ENCODE measurements at regions of chr20 and their contacts with region 1.

Region 1: GRCh38 chr20:8722276-8722928 is 346.5 kb upstream of the PLCB4 start:
- DNase-seq: no peak
- ATAC-seq: peak; percentile 64 to 72
- H3K4me3 ChIP-seq: no peak overlapping the region
- H3K27ac ChIP-seq: no peak overlapping the region
- H3K4me1 ChIP-seq: peaks cover 0 to 5% of the 10 kb centered on the region in 2 donors
- H3K27me3 ChIP-seq: no peaks in the 10 kb centered on the region
- CTCF ChIP-seq: peak; percentile 70 to 84 (median 73)
- POLR2A ChIP-seq: no peak

Region 2: DNA sequence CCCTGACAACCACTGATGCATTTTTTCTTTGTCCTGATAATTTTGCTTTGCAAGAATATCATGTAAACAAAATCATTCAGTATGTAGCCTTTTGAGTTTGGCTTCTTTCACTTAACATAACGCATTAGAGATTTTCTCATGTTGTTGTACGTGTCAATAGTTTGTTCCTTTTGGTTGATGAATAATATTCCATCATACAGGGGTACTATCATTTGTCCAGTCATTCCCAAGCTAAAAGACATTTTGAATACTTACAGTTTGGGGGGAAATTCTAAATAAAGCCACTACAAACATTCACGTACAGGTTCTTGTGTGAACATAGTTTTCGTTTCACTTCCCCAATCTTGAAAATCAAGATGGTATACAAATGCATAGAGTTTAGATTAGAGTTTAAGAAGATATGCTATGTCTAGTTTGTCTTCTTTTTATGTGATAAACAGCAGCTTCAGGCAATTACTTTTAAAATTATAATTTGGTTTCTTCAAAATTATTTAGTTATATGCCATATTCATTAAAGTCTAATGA is 787.3 kb before region 1 on chr20:
- in situ Hi-C with region 1: loop called in 1 of 4 experiments (anchors 10 kb)
- intact Hi-C with region 1: loop called (anchors 5 kb)
- DNase-seq: no peak
- ATAC-seq: no peak
- H3K4me3 ChIP-seq: no peak overlapping the region
- H3K27ac ChIP-seq: no peak overlapping the region
- H3K4me1 ChIP-seq: no peaks in the 10 kb centered on the region
- H3K27me3 ChIP-seq: no peaks in the 10 kb centered on the region
- CTCF ChIP-seq: no peak
- POLR2A ChIP-seq: no peak

Region 3: DNA sequence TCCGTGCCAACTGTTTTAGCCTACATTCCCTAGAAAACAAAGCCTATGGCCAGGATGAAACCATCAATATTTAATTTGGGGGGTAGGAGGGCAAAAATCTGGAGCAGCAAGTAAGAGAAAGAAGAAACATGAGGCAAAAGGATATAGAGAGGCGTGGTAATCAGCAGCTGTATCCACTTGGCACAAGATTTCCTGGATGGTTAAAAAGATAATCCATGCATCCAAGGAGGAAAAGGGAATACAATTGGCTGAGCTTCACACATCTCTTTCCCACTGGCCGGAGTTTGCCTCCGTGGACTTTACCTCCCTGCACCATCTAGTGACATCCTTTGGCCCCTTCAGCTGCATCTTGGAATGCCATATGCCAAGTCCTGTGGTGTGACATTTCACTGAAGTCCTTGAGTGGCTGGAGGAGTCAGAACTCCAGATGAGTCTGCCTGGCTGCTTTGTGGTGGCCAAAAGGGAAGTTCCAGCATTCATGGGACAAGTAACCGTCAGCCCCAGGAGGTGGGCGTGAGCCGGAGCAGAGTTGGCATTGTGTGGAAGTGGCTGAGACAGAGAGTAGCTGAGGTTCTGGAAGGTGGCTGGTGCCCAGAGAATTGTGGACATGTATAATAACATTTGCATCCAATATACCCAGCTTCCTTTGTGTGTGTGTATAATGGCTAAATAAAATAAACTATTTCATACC is 689.1 kb before region 1 on chr20:
- in situ Hi-C with region 1: no loop called
- intact Hi-C with region 1: no loop called
- DNase-seq: no peak
- ATAC-seq: no peak
- H3K4me3 ChIP-seq: no peak overlapping the region
- H3K27ac ChIP-seq: no peak overlapping the region
- H3K4me1 ChIP-seq: no peaks in the 10 kb centered on the region
- H3K27me3 ChIP-seq: no peaks in the 10 kb centered on the region
- CTCF ChIP-seq: no peak
- POLR2A ChIP-seq: no peak

Region 4: GRCh38 chr20:8043687-8044282 is 678.6 kb before region 1 on chr20:
- in situ Hi-C with region 1: loop called in 3 of 4 experiments (anchors 5 to 10 kb)
- intact Hi-C with region 1: loop called (anchors 1 kb)
- DNase-seq: no peak
- ATAC-seq: peak; percentile 80
- H3K4me3 ChIP-seq: no peak overlapping the region
- H3K27ac ChIP-seq: no peak overlapping the region
- H3K4me1 ChIP-seq: no peaks in the 10 kb centered on the region
- H3K27me3 ChIP-seq: no peaks in the 10 kb centered on the region
- CTCF ChIP-seq: peak; percentile 41 to 76 (median 65)
- POLR2A ChIP-seq: no peak

Region 5: DNA sequence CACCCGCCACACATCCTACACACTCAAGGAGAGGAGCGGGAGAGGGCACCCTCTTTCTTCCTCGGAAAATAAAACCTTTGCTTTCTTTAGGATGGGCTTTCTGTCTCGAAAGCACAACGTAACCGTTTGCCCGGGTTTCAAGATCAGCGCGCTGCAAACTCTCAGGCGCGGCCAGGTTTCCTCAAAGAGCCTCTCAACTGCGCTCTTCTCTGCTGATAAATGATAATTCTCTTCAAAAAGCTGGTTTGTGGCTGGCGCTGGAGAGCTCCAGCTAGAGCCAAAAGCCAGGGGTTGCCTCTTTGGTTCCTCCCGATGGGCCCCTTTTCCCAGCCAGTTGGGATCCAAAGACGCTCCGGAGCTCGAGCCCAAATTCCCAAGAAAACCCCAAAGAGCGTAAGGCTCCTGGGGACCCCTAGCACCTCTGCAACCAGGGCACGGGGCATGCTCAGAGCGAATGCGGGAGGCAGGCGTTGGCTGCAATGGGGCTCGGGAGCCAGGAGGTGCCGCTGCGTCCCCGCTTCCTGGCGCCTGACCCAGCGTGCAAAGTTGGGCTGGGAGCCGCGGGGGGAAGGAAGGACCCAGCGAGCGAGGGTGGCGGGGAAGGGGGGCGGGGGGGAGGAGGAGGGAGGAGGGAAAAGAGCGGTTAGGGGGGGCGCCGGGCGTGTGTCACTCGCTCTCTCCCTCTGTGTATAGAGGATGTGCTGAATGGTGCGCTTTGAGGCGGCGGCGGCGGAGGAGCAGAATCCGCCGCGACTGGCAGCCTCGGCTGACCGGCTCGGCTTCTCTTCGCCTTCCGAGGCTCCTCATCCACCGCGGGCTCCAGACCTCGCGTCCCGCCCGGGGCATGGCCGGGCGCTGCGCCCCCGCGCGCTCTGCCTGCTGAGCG is 590.6 kb before region 1 on chr20 and contains the start of gene PLCB1:
- in situ Hi-C with region 1: loop called in 2 of 4 experiments (anchors 5 to 10 kb)
- intact Hi-C with region 1: loop called (anchors 1 kb)
- DNase-seq: peak; percentile 70 to 73
- ATAC-seq: peak; percentile 84 to 88
- H3K4me3 ChIP-seq: peak within 1 kb of the TSS; percentile 66 to 86 (median 72)
- H3K27ac ChIP-seq: peak within 1 kb of the TSS; percentile 68 to 85 (median 73)
- H3K4me1 ChIP-seq: peaks cover 18% of the 10 kb centered on the region in 2 donors
- H3K27me3 ChIP-seq: no peaks in the 10 kb centered on the region
- CTCF ChIP-seq: peak; percentile 80 to 97 (median 88)
- POLR2A ChIP-seq: no peak
- total RNA-seq, gene PLCB1: 4.1 to 10.0 (median 7.6) TPM

Region 6: GRCh38 chr20:8389381-8390036 is 332.9 kb before region 1 on chr20:
- in situ Hi-C with region 1: loop called in 1 of 4 experiments (anchors 25 kb)
- intact Hi-C with region 1: loop called (anchors 2 kb)
- DNase-seq: no peak
- ATAC-seq: peak in 1 of 2 donors; percentile 65
- H3K4me3 ChIP-seq: peak overlapping the region in 3 of 4 donors; percentile 6 to 27 (median 22)
- H3K27ac ChIP-seq: no peak overlapping the region
- H3K4me1 ChIP-seq: peaks cover 0 to 28% of the 10 kb centered on the region in 2 donors
- H3K27me3 ChIP-seq: no peaks in the 10 kb centered on the region
- CTCF ChIP-seq: peak; percentile 46 to 68 (median 59)
- POLR2A ChIP-seq: no peak

Region 7: DNA sequence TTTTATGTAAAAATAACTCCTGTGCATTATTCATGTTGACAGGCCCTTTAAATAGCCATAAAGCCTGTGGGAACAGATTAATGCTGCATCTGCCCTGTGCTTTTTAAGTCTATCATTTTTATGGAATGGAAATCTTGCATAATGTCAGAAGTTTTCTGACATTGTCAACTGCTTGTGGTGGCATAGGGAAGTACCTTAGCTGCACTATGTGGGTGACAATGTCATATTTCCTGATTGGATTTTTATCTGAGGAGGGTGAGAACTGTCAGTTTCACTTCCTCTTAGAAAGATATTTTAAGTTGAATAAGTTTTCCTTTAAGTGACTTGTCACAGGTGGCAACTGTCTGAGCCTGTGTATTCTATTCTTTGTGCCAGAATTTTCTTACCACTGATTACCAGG is 322.5 kb before region 1 on chr20:
- in situ Hi-C with region 1: loop called in 2 of 4 experiments (anchors 25 kb)
- intact Hi-C with region 1: no loop called
- DNase-seq: no peak
- ATAC-seq: no peak
- H3K4me3 ChIP-seq: no peak overlapping the region
- H3K27ac ChIP-seq: no peak overlapping the region
- H3K4me1 ChIP-seq: peaks cover 0 to 19% of the 10 kb centered on the region in 2 donors
- H3K27me3 ChIP-seq: no peaks in the 10 kb centered on the region
- CTCF ChIP-seq: no peak
- POLR2A ChIP-seq: no peak

Region 8: DNA sequence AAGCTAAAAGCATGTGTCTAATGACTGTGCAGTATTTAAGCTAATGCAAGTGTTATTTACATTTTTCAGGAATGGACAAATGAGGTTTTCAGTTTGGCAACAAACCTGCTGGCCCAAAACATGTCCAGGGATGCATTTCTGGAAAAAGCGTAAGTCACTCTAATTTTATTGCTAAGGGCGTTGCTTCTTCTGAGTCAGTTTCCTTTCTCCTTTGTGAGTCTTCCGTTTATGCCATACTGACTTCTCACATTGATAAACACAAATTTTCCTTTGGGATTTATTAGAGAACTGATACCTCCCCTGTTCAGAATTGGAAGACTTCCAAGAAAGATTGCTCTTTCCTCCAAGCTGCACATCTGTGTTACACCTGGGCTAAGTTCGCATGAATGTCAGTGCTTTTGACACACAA is 76.4 kb before region 1 on chr20:
- in situ Hi-C with region 1: no loop called
- intact Hi-C with region 1: no loop called
- DNase-seq: no peak
- ATAC-seq: peak in 1 of 2 donors; percentile 36
- H3K4me3 ChIP-seq: no peak overlapping the region
- H3K27ac ChIP-seq: peak overlapping the region in 2 of 4 donors; percentile 5 to 50
- H3K4me1 ChIP-seq: peaks cover 0 to 16% of the 10 kb centered on the region in 2 donors
- H3K27me3 ChIP-seq: no peaks in the 10 kb centered on the region
- CTCF ChIP-seq: no peak
- POLR2A ChIP-seq: no peak